GM13977 (cell line): ENCODE measurements at regions of chr4 and their contacts with region 1.

Region 1: DNA sequence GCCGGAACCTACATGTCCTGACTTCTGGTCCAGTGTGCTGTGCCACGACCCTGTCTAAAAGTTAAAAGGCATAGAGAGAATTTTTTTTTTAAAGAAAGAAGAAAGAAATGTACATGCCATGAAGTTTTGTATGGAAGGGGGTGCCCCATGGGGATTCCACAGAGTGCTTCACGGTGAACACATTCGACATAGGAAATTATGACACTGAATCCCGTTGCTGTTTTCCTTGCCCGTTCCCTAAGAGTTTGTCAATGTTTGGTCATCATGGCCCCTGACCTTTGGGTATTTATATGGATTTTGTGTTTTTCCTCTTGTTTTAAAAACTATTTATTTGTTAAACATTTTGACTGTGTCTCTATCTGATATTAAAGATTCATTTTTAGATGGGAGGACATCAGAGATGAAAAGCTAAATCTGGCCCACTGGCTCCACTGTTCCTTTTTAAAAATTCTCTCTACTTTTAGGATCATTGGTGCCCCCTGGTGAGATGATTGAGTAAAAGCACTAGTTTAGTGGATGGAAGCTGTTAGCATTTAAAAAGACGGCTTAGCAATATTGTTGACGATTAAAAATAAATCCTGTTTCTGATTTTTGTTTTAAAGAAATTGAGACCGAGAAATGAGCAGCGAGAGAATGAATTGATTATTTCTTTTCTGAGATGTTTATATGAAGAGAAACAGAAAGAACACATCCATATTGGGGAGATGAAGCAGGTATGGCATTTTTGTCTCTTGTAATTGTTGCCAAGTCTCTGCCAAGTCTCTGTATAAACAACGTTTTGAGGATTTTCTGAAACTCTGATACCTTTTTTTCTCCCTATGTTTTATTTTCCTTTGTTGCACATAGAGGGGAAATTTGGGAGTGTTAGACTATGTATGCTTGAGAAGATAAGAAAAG is 75.0 kb downstream of the PTTG2 start:
- DNase-seq: peak; percentile 71
- CTCF ChIP-seq: peak; percentile 63

Region 2: DNA sequence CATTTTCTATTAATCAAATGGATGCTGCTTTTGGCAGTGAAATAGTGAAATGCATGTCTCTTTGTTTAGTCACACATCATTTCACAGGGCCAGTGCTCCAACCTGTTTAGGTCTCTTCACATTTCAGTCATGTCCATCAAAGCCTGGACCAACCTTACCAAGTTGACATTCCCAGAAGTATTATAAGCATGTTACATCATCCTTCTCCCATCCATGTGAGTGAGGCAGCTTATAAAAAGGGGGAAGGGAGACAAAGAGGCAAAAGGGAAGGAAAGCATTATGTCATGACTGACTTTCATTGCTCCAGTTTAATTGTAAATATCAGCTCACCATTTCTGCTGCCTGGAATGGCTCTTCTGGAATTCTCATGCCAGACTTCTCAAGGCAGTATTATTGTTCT is 696.3 kb before region 1 on chr4:
- in situ Hi-C with region 1: no loop called
- DNase-seq: no peak
- CTCF ChIP-seq: no peak

Region 3: GRCh38 chr4:37452952-37453280 is 582.3 kb before region 1 on chr4:
- in situ Hi-C with region 1: loop called (anchors 25 kb)
- DNase-seq: peak; percentile 78
- CTCF ChIP-seq: peak; percentile 63

Region 4: DNA sequence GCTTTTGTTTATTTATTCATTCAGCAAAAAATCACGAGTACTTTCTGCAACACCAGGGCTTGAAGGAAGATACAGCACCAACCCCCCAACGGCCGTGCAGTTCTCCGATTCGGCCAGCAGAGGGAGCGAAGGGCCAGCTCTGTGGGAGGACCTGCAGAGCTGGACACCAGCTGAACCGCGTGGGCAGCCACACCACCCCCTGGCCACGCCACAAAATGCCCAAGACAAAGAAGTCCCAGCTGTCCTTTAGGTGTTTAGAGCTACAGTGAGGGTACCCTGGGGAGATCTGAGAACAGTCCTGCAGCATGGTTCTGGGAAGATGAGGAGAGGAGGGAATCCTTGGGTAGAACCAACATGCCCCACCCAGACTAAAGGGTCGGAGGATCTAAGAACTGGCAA is 432.2 kb before region 1 on chr4:
- in situ Hi-C with region 1: loop called (anchors 10 kb)
- DNase-seq: peak; percentile 81
- CTCF ChIP-seq: peak; percentile 97

Region 5: GRCh38 chr4:37802068-37802666 is 233.1 kb before region 1 on chr4:
- in situ Hi-C with region 1: loop called (anchors 5 kb)
- DNase-seq: no peak
- CTCF ChIP-seq: peak; percentile 50